Activated B cell treated with CpG ODN at 0.5 μM for 24 hours (primary cell): ENCODE measurements at regions of chr5 and their contacts with region 1.

Region 1: DNA sequence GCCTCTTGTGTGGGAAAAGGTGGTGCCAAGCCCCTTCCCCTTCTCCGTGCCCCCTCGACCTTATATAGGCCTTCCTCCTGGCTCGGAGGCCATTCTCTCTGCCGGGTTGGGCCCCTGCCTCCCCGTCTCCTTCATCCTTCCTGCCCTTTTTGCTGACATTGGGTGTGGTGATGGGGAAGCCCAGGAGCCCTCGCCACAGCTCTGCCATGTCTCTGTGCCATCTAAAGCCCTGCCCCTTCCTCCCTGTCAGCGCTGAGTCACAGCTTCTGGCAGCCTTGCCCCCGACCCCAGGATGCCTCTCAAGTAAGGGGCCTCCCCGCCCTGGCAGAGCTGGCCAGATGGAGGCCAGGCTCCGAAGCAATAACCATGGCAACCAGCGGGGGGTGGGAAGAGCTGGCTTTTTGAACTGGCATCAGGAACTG is 30.4 kb downstream of the JADE2 start:
- DNase-seq: peak; percentile 75
- ATAC-seq: peak; percentile 73
- H3K4me3 Mint-ChIP-seq: peak overlapping the region; percentile 75
- H3K27ac Mint-ChIP-seq: peak overlapping the region; percentile 98
- H3K4me1 Mint-ChIP-seq: peaks cover 64% of the 10 kb centered on the region
- H3K27me3 Mint-ChIP-seq: no peaks in the 10 kb centered on the region
- CTCF ChIP-seq: no peak

Region 2: GRCh38 chr5:134041570-134042411 is 514.1 kb before region 1 on chr5:
- CTCF ChIA-PET with region 1: no interaction called
- POLR2A ChIA-PET with region 1: no interaction called
- intact Hi-C with region 1: no loop called
- DNase-seq: no peak
- ATAC-seq: no peak
- H3K4me3 Mint-ChIP-seq: no peak overlapping the region
- H3K27ac Mint-ChIP-seq: no peak overlapping the region
- H3K4me1 Mint-ChIP-seq: peaks cover 4% of the 10 kb centered on the region
- H3K27me3 Mint-ChIP-seq: no peaks in the 10 kb centered on the region
- CTCF ChIP-seq: no peak

Region 3: DNA sequence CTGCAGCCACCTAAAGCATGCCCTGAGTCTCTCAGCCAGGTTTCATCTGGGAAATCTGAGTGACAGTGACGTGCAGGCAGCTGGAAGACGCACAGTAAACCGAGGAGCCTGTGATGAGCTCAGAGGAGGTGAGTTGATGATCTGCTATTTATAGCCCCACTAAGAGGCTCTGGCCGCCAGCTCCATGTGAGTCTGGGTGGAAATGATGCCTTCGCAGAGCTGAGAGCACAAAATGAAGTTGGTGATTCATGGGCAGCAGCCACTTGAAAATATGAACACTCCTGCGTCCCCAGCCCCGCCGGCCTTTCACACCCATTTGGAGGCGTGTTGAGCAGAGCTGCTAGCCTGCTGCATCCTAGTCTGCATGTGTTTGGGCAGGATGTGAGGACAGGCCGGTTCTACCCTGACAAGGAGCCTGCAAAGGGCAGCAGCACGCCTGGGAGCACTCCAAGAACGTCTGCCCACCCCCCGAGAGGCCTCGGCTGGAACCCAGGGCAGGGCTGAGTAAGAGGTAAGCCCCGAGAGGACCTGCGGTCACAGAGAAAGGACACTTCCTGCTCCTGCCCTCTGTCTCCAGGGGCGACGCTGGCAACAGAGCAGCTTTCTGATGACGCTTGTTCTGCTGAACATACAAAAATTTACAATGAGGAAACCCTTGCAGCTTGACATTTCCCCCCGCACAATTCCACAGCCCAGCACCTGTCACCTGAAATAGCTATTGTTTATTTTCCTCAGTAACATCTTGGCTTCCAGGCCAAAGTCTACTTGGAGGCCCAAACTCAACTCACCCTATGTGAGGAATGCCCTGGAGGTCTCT is 119.2 kb before region 1 on chr5:
- CTCF ChIA-PET with region 1: no interaction called
- POLR2A ChIA-PET with region 1: interaction called, 13 read pairs
- intact Hi-C with region 1: loop called (anchors 1 kb)
- DNase-seq: peak; percentile 64
- ATAC-seq: peak; percentile 95
- H3K4me3 Mint-ChIP-seq: peak overlapping the region; percentile 56
- H3K27ac Mint-ChIP-seq: peak overlapping the region; percentile 68
- H3K4me1 Mint-ChIP-seq: peaks cover 25% of the 10 kb centered on the region
- H3K27me3 Mint-ChIP-seq: no peaks in the 10 kb centered on the region
- CTCF ChIP-seq: no peak

Region 4: DNA sequence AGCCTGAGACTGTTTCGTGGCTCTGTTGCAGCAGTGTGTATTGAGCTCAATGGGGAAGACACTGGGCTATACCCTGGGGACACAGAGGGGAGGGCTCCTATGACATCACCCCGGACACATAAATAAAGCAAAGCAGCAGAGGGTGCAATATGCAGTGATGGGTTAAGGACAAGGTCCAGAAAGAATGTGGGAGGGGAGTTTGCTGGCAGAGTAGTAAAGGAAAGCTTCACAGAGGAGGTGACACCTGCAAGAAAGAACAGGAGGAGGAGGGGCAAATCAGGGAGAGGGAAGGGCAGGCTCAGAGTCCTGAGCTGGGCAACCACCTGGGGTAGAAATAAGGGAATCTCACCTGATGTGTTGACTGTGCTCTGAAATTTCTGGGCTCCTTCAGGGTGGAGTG is 109.0 kb before region 1 on chr5:
- CTCF ChIA-PET with region 1: interaction called, 4 read pairs
- POLR2A ChIA-PET with region 1: interaction called, 15 read pairs
- intact Hi-C with region 1: no loop called
- DNase-seq: peak; percentile 44
- ATAC-seq: peak; percentile 84
- H3K4me3 Mint-ChIP-seq: peak overlapping the region; percentile 13
- H3K27ac Mint-ChIP-seq: peak overlapping the region; percentile 76
- H3K4me1 Mint-ChIP-seq: peaks cover 53% of the 10 kb centered on the region
- H3K27me3 Mint-ChIP-seq: no peaks in the 10 kb centered on the region
- CTCF ChIP-seq: no peak

Region 5: GRCh38 chr5:134465816-134466240 is 90.1 kb before region 1 on chr5:
- CTCF ChIA-PET with region 1: no interaction called
- POLR2A ChIA-PET with region 1: interaction called, 22 read pairs
- intact Hi-C with region 1: no loop called
- DNase-seq: peak; percentile 68
- ATAC-seq: peak; percentile 82
- H3K4me3 Mint-ChIP-seq: peak overlapping the region; percentile 79
- H3K27ac Mint-ChIP-seq: peak overlapping the region; percentile 66
- H3K4me1 Mint-ChIP-seq: peaks cover 43% of the 10 kb centered on the region
- H3K27me3 Mint-ChIP-seq: no peaks in the 10 kb centered on the region
- CTCF ChIP-seq: no peak

Region 6: DNA sequence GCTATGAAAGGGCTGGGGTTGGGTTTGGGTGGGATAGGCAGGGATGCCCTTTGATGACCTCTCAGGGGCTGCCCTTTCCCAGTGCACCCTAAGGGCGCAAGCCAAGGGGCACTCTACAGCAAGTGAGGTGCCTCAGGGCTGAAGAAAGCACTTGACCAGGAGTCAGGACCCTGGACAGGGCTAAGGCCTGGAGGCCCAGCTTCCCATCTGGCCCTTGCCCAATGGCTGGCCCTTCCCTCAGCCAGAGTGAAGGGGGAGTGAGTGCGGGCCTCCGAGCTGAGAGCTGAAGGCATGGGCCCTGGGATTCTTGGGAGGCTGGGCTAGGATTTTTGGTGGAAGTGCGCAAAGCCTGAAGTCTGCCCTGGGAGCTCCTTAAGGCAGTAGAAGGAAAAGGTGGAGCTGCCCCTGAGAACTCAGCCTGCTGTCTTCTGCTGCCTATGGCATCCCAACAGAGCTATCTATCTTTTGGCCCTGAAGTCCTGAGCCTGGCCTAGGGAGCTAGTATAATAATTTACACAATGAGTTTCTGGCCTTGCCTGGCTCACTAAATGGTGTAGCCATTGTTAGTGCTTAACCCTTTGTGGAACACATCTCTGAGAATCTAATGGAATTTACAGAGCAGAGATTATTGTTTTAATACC is 14.0 kb before region 1 on chr5:
- CTCF ChIA-PET with region 1: interaction called, 59 read pairs
- POLR2A ChIA-PET with region 1: interaction called, 763 read pairs
- intact Hi-C with region 1: loop called (anchors 1 kb)
- DNase-seq: no peak
- ATAC-seq: no peak
- H3K4me3 Mint-ChIP-seq: peak overlapping the region; percentile 78
- H3K27ac Mint-ChIP-seq: peak overlapping the region; percentile 96
- H3K4me1 Mint-ChIP-seq: peaks cover 86% of the 10 kb centered on the region
- H3K27me3 Mint-ChIP-seq: no peaks in the 10 kb centered on the region
- CTCF ChIP-seq: no peak

Region 7: GRCh38 chr5:134577796-134578363 is 22.0 kb after region 1 on chr5:
- CTCF ChIA-PET with region 1: interaction called, 8 read pairs
- POLR2A ChIA-PET with region 1: interaction called, 4 read pairs
- intact Hi-C with region 1: loop called (anchors 1 kb)
- DNase-seq: peak; percentile 72
- ATAC-seq: peak; percentile 72
- H3K4me3 Mint-ChIP-seq: no peak overlapping the region
- H3K27ac Mint-ChIP-seq: peak overlapping the region; percentile 27
- H3K4me1 Mint-ChIP-seq: peaks cover 17% of the 10 kb centered on the region
- H3K27me3 Mint-ChIP-seq: no peaks in the 10 kb centered on the region
- CTCF ChIP-seq: peak; percentile 55

Region 8: GRCh38 chr5:134648425-134649162 is 92.7 kb after region 1 on chr5 and contains the start of gene SEC24A:
- CTCF ChIA-PET with region 1: no interaction called
- POLR2A ChIA-PET with region 1: interaction called, 3 read pairs
- intact Hi-C with region 1: loop called (anchors 2 kb)
- DNase-seq: peak; percentile 86
- ATAC-seq: peak; percentile 77
- H3K4me3 Mint-ChIP-seq: peak within 1 kb of the TSS; percentile 91
- H3K27ac Mint-ChIP-seq: peak within 1 kb of the TSS; percentile 96
- H3K4me1 Mint-ChIP-seq: peaks cover 22% of the 10 kb centered on the region
- H3K27me3 Mint-ChIP-seq: no peaks in the 10 kb centered on the region
- CTCF ChIP-seq: no peak
- total RNA-seq, gene SEC24A: 13.8 and 15.6 TPM in 2 replicates